A673 (cell line): ENCODE measurements at regions of chr5 and their contacts with region 1.

Region 1: DNA sequence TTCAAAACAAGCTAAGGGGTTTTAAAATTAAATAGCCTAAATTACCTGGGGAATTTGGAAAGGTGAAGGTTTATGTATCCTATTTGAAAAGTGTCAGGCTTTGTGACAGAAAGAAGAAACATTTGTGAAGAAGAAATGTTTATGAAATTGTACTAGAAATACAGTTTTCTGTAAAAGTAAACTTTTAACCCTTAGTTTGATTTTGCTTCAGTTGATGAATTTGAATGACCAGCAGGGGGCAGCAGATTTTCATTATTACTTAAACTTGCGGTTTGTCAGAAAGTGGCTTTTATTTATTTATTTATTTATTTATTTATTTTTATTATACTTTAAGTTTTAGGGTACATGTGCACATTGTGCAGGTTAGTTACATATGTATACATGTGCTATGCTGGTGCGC is 58.1 kb downstream of the NNT start:
- DNase-seq: peak; percentile 69
- H3K4me3 ChIP-seq: no peak overlapping the region
- H3K27ac ChIP-seq: no peak overlapping the region
- H3K4me1 ChIP-seq: no peaks in the 10 kb centered on the region
- H3K27me3 ChIP-seq: no peaks in the 10 kb centered on the region
- CTCF ChIP-seq: peak; percentile 57

Region 2: DNA sequence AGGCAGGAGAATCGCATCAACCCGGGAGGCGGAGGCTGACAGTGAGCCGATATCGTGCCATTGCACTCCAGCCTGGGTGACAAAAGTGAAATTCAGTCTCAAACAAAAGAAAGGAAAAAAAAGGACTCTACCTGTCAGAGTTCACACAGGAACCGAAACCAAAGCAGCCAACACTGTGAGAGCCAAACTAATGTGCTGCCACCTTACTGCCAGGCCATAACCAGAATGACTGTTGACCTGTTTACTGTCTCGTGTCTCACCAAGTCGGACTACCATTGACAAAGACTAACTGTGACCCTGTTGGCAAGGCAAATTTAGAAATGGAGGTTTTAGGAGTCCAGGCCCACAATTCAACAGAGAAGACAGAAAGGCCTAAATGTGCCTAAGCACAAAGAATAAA is 733.4 kb before region 1 on chr5:
- CTCF ChIA-PET with region 1: no interaction called
- POLR2A ChIA-PET with region 1: no interaction called
- intact Hi-C with region 1: no loop called
- DNase-seq: no peak
- H3K4me3 ChIP-seq: no peak overlapping the region
- H3K27ac ChIP-seq: no peak overlapping the region
- H3K4me1 ChIP-seq: no peaks in the 10 kb centered on the region
- H3K27me3 ChIP-seq: no peaks in the 10 kb centered on the region
- CTCF ChIP-seq: no peak

Region 3: DNA sequence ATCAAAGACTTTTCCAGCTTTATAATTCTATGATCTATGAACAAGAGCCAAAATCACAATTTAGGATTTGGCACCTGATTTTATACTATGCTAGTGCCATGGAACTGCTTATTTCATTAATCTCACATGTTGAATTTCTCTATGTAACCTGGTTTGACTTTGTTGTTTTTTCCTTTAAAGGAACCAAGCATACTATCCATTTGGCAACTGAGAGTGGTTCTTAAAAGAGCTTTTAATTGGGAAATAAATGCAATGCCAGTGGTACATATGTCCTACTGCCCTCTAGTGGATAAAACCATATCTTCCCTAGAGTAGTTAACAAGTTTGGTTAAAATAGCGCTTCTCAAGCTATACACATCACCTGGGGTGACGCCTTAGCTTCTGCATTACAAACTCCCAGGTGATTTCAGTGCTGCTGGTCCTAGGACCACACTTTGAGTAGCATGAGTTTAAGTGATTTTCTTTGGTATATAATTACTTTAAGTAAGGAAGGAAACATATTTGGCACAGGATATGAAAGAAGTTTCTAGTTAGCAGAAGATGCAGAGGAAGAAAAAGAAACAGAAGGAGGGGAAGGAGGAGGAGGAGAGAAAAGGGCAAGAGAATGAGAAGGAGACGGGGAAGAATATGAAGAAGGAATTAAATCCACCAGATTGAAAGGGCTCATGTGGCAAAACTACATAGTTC is 671.3 kb after region 1 on chr5:
- CTCF ChIA-PET with region 1: no interaction called
- POLR2A ChIA-PET with region 1: no interaction called
- intact Hi-C with region 1: loop called (anchors 2 kb)
- DNase-seq: peak; percentile 64
- H3K4me3 ChIP-seq: no peak overlapping the region
- H3K27ac ChIP-seq: no peak overlapping the region
- H3K4me1 ChIP-seq: peaks cover 4% of the 10 kb centered on the region
- H3K27me3 ChIP-seq: no peaks in the 10 kb centered on the region
- CTCF ChIP-seq: peak; percentile 75